Activated naive CD4-positive, alpha-beta T cell treated with anti-CD3 and anti-CD28 coated beads for 36 hours (primary cell): ENCODE measurements at regions of chr1 and their contacts with region 1.

Region 1: GRCh38 chr1:162835157-162835899 is 25.6 kb downstream of the CCDC190 start:
- DNase-seq: no peak
- H3K4me3 Mint-ChIP-seq: no peak overlapping the region
- H3K27ac Mint-ChIP-seq: no peak overlapping the region
- H3K4me1 Mint-ChIP-seq: peaks cover 7% of the 10 kb centered on the region
- H3K27me3 Mint-ChIP-seq: peaks cover 12% of the 10 kb centered on the region

Region 2: GRCh38 chr1:162822391-162823200 is 12.7 kb before region 1 on chr1:
- CTCF ChIA-PET with region 1: no interaction called
- intact Hi-C with region 1: loop called (anchors 1 kb)
- DNase-seq: no peak
- H3K4me3 Mint-ChIP-seq: peak overlapping the region; percentile 54
- H3K27ac Mint-ChIP-seq: no peak overlapping the region
- H3K4me1 Mint-ChIP-seq: peaks cover 15% of the 10 kb centered on the region
- H3K27me3 Mint-ChIP-seq: peaks cover 38% of the 10 kb centered on the region

Region 3: DNA sequence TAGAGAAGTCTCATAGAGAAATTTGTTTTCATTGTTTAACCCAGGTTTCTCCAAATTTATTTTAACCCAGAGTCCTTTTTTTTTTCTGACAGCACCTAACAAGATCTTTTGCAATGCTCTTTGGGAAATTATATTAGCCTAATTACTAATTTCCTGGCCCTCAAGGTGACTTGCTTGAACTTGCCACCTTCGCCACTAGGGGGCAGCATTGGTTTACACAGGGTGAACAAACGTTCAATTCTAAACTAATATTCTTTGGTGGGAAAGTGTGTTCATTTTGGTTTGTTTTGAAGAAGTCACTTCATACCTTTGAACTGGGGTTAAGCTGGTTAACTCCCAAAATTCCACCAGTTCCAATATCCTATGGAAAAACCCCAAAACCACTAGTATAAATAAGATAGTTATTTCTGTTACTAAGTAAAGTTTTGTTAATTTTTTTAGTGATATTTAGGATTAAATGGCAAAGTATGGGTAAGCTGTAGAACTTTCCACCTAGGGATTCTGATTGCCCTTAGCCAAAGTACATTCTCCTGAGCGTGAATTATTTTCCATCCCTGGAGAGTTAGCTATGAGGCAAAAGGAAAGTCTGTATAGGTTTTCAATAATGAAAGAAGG is 12.6 kb after region 1 on chr1:
- CTCF ChIA-PET with region 1: interaction called, 11 read pairs
- intact Hi-C with region 1: no loop called
- DNase-seq: peak; percentile 89
- H3K4me3 Mint-ChIP-seq: no peak overlapping the region
- H3K27ac Mint-ChIP-seq: no peak overlapping the region
- H3K4me1 Mint-ChIP-seq: no peaks in the 10 kb centered on the region
- H3K27me3 Mint-ChIP-seq: no peaks in the 10 kb centered on the region